Naive thymus-derived CD4-positive, alpha-beta T cell (primary cell): ENCODE measurements at regions of chr19 and their contacts with region 1.

Region 1: DNA sequence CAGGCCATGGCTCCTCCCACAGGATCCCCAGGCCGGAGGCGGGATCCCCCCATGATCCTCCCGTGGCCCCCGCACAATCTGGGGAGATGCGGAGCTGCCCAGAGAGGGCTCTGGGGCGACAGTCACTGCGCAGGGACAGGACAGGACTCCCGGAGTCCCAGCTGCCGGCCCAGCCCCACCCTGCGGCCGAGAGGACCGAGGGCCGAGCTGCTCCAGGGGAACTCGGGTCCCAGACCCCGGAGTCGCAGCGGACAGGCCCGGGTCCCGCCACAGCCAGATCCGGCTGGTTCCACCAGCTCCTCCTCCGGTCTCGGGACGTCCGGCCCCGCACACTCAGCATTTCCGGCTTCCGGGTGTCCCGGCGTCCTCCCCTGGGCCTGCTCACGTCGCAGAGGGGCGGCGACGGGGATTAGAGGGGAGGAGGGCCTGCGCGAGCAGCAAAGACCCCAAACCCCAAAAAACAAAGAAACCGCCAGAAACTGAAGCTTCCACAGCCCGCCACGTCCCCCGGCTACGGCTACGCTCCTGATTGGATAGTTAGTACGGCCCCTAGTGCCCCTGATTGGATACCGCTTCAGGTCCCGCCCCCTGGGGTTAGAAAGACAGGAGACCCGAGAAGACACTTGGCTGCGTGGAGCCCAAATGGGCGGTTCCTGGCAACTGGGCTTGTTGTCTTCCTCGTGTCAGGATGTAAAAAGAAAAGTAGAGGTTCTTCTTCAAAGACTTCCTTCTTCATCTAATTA is 21.3 kb upstream of the OR10H1 start:
- DNase-seq: peak; percentile 81 to 98 (median 97)
- ATAC-seq: peak; percentile 94
- H3K4me3 ChIP-seq: peak overlapping the region; percentile 60
- H3K4me3 Mint-ChIP-seq: peak overlapping the region; percentile 88 to 99 (median 95)
- H3K27ac ChIP-seq: peak overlapping the region; percentile 90
- H3K27ac Mint-ChIP-seq: peak overlapping the region in 7 of 9 donors; percentile 95 to 100 (median 98)
- H3K4me1 ChIP-seq: peaks cover 5 to 7% of the 10 kb centered on the region in 2 donors
- H3K4me1 Mint-ChIP-seq: peaks cover 18 to 28% (median 24%) of the 10 kb centered on the region in 7 donors
- H3K27me3 ChIP-seq: no peaks in the 10 kb centered on the region
- H3K27me3 Mint-ChIP-seq: no peaks in the 10 kb centered on the region

Region 2: DNA sequence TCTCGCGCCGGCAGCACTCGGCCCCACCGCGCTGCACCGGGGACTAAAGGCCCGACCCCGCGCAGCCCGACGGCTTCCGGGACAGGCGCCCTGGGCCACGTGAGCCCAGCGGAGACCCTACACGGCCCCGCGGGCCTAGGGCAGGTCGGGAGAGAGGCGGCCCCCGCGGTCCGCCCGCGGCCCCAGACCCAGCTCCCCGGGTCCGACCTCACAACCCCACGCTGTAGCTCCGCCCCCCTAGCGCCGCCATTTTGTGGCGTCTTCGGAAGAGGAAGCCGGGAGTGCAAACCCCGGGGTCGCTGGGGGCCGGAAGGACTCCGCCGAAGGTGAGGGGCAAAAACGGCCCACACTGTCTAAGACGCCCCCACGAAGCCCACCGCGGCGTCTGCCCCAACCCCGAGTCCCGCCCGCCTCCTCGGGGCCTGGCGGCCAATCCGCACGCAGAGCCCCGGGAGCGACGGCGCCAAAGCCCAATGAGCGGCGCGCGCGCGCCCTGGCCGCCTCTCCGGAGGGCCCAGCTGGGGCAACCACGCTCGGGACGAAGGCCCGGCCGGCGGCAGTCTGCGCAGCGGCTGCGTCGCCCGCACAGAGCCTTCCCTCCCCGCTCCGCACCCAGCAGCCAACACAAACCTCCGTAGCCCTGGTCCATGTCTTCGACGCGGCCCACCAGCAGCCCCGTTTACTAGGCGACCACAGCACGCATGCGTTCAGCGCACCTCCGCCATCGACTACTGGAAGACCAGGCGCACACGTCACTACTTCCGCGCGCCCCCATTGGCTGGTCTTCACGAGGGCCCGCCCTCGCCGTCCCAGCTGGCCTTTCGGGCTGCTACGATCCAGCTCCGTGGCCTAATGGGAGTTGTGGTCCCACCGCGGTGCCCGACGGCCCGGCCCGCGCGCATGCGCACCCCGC is 457.4 kb before region 1 on chr19 and contains the start of gene AKAP8:
- CTCF ChIA-PET with region 1: no interaction called
- POLR2A ChIA-PET with region 1: interaction called, 3 read pairs
- intact Hi-C with region 1: loop called in 1 of 2 experiments (anchors 1 kb)
- DNase-seq: peak; percentile 93 to 99 (median 98)
- ATAC-seq: peak; percentile 96
- H3K4me3 ChIP-seq: peak within 1 kb of the TSS; percentile 98
- H3K4me3 Mint-ChIP-seq: peak within 1 kb of the TSS; percentile 93 to 100 (median 99)
- H3K27ac ChIP-seq: peak within 1 kb of the TSS; percentile 97
- H3K27ac Mint-ChIP-seq: peak within 1 kb of the TSS; percentile 97 to 100 (median 100)
- H3K4me1 ChIP-seq: peaks cover 24 to 28% of the 10 kb centered on the region in 2 donors
- H3K4me1 Mint-ChIP-seq: peaks cover 13 to 46% (median 35%) of the 10 kb centered on the region in 7 donors
- H3K27me3 ChIP-seq: no peaks in the 10 kb centered on the region
- H3K27me3 Mint-ChIP-seq: no peaks in the 10 kb centered on the region
- total RNA-seq, gene AKAP8: 60.0 to 81.2 (median 80.2) TPM

Region 3: DNA sequence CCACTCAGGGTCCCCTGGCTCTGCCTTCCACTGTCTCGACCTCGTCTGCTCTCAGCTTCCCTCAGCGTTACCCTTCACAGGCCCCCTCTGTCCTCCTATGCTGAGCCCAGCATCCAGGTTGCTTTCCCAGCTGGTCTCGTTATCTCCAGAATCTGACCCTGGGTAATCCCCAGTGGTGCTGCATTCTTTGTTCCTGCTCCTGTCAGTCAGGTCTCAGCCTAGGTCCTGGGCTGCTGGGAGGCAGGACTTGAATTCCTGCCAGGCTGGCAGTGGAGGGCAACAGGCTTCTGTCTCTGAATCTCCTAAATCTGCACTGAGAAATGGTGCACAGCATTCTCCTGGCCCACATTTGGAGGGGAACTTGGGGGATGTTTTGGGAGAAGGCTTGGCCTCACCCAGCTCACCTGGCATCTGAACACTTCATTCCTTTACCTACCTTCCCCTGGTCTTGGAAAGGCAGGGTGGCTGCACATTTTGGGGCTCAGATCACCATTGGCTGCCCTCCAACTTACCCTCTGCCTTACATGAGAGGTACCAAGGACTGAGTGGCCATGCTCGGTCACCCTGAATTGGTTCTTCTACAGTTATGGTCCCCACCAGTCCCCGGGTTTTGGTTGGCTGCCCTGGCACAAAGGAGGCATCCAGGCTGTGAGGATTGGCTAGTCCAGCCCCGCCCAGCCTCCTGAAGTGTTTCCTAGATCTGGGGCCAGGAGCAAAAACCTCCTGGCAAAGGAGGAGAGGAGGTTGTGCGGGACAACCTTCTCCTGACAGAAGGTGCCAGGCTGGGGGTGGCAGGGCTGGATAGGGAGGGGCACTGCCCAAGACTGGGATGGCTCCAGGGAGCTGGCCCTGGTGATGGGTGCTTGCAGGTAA is 222.0 kb before region 1 on chr19 and contains the start of gene CYP4F8:
- CTCF ChIA-PET with region 1: no interaction called
- POLR2A ChIA-PET with region 1: no interaction called
- intact Hi-C with region 1: no loop called
- DNase-seq: no peak
- ATAC-seq: no peak
- H3K4me3 ChIP-seq: no peak within 1 kb of the TSS
- H3K4me3 Mint-ChIP-seq: no peak within 1 kb of the TSS
- H3K27ac ChIP-seq: no peak within 1 kb of the TSS
- H3K27ac Mint-ChIP-seq: no peak within 1 kb of the TSS
- H3K4me1 ChIP-seq: no peaks in the 10 kb centered on the region
- H3K4me1 Mint-ChIP-seq: peaks cover 0 to 9% (median 0%) of the 10 kb centered on the region in 7 donors
- H3K27me3 ChIP-seq: no peaks in the 10 kb centered on the region
- H3K27me3 Mint-ChIP-seq: peaks cover 2 to 28% (median 25%) of the 10 kb centered on the region in 5 donors
- total RNA-seq, gene CYP4F8: not detected

Region 4: DNA sequence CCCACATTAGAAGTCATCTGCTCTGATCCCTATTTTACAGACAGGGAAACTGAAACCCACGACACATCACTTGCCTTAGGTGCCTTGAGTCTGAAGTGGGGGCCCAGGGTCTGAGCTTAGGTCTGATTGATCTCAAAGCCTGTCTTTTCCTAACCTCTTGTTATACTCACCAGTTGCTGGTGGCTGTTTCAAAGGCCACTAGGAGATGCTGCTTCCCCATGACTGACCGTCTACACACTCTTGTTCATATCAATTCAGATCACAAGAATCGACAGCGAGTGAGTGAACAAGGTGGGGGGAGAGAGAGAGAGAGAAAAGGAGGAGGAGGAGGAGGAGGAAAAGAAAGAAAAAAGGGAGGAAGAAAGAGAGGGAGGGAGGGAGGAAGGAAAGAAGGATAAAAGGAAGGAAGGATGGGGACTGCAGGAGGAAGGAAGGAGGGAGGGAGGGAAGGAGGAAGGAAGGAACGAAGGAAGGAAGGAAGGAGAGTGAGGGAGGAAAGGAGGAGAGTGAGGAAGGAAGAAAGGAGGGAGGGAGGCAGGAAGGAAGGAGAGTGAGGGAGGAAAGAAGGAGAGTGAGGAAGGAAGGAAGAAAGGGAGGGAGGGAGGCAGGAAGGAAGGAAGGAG is 24.6 kb before region 1 on chr19:
- CTCF ChIA-PET with region 1: interaction called, 4 read pairs
- POLR2A ChIA-PET with region 1: interaction called, 3 read pairs
- intact Hi-C with region 1: loop called in 1 of 2 experiments (anchors 2 kb)
- DNase-seq: peak in 6 of 9 donors; percentile 28 to 71 (median 38)
- ATAC-seq: no peak
- H3K4me3 ChIP-seq: no peak overlapping the region
- H3K4me3 Mint-ChIP-seq: peak overlapping the region in 1 of 10 donors; percentile 3
- H3K27ac ChIP-seq: no peak overlapping the region
- H3K27ac Mint-ChIP-seq: peak overlapping the region in 4 of 9 donors; percentile 38 to 56 (median 48)
- H3K4me1 ChIP-seq: peaks cover 3 to 8% of the 10 kb centered on the region in 2 donors
- H3K4me1 Mint-ChIP-seq: peaks cover 2 to 24% (median 14%) of the 10 kb centered on the region in 7 donors
- H3K27me3 ChIP-seq: peaks cover 0 to 4% of the 10 kb centered on the region in 2 donors
- H3K27me3 Mint-ChIP-seq: peaks cover 6 to 27% (median 14%) of the 10 kb centered on the region in 5 donors

Region 5: DNA sequence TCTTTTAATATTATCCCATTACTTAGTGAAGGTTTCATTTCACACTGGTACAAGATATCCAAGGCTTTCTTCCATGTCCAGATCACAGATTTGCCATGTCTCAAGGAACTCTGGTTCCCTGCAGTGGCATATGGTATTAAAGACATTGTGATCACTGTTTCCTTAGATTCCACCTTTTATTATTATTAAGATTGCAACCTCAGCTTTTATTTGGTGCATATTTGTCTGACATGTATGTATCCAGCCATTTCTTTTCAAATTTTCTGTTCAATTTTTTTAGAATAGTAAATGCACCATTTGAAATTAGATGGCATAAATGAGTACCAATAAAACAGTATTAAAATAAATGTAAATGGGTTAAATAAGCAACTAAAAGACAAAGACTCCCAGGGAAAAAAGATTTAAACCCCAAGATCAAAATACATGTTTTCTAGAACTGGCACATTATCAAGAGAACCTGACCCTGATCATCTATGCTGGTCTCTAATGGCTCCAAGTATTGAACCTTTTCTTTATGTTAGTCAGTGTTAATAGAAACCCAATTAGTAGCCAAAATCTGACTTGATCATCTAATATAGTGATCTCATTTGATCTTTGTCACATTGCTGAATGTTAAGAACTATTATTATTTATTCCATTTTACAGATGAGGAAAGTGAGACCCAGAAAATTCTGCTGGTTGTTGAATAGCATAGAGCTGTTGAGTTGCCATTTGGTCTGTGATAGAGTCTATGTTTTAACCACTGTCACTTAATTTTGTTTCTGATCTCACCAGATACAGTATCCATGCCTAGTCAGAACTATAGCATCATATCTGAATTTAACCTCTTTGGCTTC is 111.7 kb after region 1 on chr19 and contains the start of gene OR10H4:
- CTCF ChIA-PET with region 1: no interaction called
- POLR2A ChIA-PET with region 1: no interaction called
- intact Hi-C with region 1: no loop called
- DNase-seq: no peak
- ATAC-seq: no peak
- H3K4me3 ChIP-seq: no peak within 1 kb of the TSS
- H3K4me3 Mint-ChIP-seq: peak within 1 kb of the TSS in 1 of 10 donors; percentile 36
- H3K27ac ChIP-seq: no peak within 1 kb of the TSS
- H3K27ac Mint-ChIP-seq: no peak within 1 kb of the TSS
- H3K4me1 ChIP-seq: no peaks in the 10 kb centered on the region
- H3K4me1 Mint-ChIP-seq: no peaks in the 10 kb centered on the region
- H3K27me3 ChIP-seq: peaks cover 0 to 2% of the 10 kb centered on the region in 2 donors
- H3K27me3 Mint-ChIP-seq: peaks cover 22 to 70% (median 54%) of the 10 kb centered on the region in 5 donors
- total RNA-seq, gene OR10H4: not detected

Region 6: DNA sequence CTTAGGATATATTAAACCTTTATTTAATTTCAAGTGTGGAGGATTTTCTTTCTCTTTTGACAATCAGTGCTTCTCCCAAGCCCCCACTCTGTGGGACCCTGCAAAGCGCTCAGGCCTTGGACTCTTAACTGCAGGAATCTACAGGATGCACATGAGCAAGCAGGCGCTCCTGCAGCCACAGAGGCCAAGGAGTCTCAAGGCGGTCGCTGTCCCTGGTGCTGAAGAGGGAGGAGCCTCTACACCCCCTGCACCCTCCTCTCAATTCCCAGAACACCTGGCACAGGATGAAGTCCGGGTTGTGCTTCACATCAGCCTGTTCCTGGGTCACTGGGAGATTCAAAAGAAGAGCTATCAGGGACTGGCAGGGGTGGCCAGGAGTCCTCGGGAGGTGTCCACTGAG is 125.6 kb after region 1 on chr19:
- CTCF ChIA-PET with region 1: no interaction called
- POLR2A ChIA-PET with region 1: no interaction called
- intact Hi-C with region 1: no loop called
- DNase-seq: no peak
- ATAC-seq: no peak
- H3K4me3 ChIP-seq: no peak overlapping the region
- H3K4me3 Mint-ChIP-seq: no peak overlapping the region
- H3K27ac ChIP-seq: no peak overlapping the region
- H3K27ac Mint-ChIP-seq: no peak overlapping the region
- H3K4me1 ChIP-seq: no peaks in the 10 kb centered on the region
- H3K4me1 Mint-ChIP-seq: no peaks in the 10 kb centered on the region
- H3K27me3 ChIP-seq: no peaks in the 10 kb centered on the region
- H3K27me3 Mint-ChIP-seq: peaks cover 0 to 58% (median 48%) of the 10 kb centered on the region in 5 donors

Region 7: GRCh38 chr19:16076154-16076957 is 239.6 kb after region 1 on chr19 and contains the start of gene TPM4:
- CTCF ChIA-PET with region 1: no interaction called
- POLR2A ChIA-PET with region 1: interaction called, 3 read pairs
- intact Hi-C with region 1: loop called in 1 of 2 experiments (anchors 2 kb)
- DNase-seq: peak; percentile 43 to 89 (median 50)
- ATAC-seq: peak; percentile 68
- H3K4me3 ChIP-seq: peak within 1 kb of the TSS; percentile 82
- H3K4me3 Mint-ChIP-seq: peak within 1 kb of the TSS; percentile 84 to 97 (median 90)
- H3K27ac ChIP-seq: peak within 1 kb of the TSS; percentile 89
- H3K27ac Mint-ChIP-seq: peak within 1 kb of the TSS; percentile 90 to 99 (median 97)
- H3K4me1 ChIP-seq: peaks cover 29 to 72% of the 10 kb centered on the region in 2 donors
- H3K4me1 Mint-ChIP-seq: peaks cover 54 to 80% (median 65%) of the 10 kb centered on the region in 7 donors
- H3K27me3 ChIP-seq: no peaks in the 10 kb centered on the region
- H3K27me3 Mint-ChIP-seq: no peaks in the 10 kb centered on the region
- total RNA-seq, gene TPM4: 65.8 to 435 (median 126) TPM

Region 8: DNA sequence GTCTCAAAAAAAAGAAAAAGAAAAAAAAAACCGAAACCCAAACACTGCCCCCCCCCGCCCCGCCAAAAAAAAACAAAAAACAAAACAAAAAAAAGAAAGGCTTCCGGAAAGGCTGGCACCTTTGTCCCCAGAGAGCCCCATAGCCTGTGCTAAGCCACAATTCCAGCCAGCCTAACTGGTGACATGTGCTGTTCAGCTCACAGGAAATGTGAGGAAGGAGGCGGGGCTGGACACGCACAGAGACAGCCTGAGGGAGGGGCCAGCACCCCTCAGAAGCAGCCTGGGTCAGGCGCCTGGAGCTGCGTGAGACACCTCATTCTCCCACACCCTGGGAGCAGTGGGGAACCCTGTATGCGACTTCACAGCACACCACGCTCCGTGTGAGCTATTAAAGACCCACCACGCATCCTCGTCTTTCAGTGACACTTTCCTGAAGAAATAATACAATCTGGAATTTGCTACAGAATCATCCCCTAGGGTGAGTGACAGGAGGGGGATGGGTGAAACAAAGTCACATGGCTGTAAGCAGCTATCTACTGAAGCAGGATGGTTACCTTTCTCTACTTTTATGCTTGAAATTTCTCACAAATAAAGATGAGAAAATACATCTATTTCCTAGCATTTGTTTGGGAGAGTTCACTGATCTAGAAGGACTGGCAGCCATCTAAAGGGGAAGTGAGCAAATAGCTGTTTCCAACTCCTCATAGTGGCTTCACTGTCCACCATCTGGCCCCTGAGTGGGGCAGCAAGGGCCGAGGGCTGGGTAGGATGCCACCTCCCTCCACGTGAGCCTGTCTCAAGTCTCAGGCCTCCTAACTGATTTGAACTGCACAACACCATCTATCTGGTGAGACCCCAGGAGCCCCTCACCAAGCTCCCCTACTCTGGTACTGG is 747.7 kb after region 1 on chr19:
- CTCF ChIA-PET with region 1: no interaction called
- POLR2A ChIA-PET with region 1: no interaction called
- intact Hi-C with region 1: loop called in 1 of 2 experiments (anchors 5 kb)
- DNase-seq: peak; percentile 68 to 93 (median 86)
- ATAC-seq: peak; percentile 89
- H3K4me3 ChIP-seq: peak overlapping the region; percentile 26
- H3K4me3 Mint-ChIP-seq: peak overlapping the region; percentile 70 to 90 (median 78)
- H3K27ac ChIP-seq: peak overlapping the region; percentile 62
- H3K27ac Mint-ChIP-seq: peak overlapping the region; percentile 82 to 95 (median 90)
- H3K4me1 ChIP-seq: peaks cover 65% of the 10 kb centered on the region in 2 donors
- H3K4me1 Mint-ChIP-seq: peaks cover 49 to 90% (median 77%) of the 10 kb centered on the region in 7 donors
- H3K27me3 ChIP-seq: no peaks in the 10 kb centered on the region
- H3K27me3 Mint-ChIP-seq: no peaks in the 10 kb centered on the region